GM10248 (cell line): ENCODE measurements at regions of chr7 and their contacts with region 1.

Region 1: DNA sequence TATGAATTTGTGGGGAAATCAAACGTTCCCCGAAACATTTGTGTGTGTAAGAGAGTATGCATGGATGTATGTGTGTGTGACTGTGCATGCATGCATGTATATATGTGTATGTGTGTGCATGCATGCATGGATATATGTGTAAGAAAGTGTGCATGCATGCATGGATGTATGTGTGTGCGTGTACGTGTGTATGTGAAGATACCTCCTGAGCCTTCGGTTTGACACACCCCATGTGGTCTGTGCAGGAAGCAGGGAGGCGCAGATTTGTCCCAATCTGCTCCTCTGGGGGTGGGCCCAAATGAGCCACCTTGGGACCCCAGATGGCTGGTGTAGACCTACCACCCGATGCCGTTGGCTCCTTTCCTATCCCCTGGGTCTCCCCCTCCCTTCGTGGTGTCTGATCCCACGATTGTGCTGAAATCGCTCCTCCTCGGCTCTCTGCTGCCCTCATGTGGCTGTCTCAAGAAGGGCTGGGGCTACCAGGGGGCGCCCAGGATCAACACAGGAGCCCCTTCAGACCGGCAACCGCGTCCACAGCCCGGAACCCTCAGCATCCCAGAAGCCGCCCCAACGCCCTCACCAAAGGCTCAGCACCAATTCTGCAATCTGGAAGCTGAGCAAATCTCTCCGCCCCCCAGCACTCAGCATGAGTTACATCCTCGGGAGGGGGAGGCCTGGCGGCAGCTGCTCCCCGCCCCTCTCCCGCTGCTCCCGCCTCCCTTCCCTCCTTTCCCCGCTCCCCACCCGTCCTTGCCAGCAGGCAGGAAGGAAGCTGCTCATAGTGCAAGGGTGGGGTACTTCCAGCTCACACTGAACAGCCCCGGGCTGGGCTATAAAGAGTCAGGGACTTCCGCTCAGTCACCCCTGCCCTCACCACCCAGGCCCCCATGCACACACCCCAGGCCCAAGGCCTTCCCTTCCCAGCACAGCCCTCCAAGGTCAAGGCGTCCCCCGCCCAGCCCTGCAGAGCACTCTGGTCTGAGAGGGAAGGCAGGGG is 2.3 kb upstream of the NOS3 start:
- DNase-seq: peak; percentile 78
- CTCF ChIP-seq: peak; percentile 73

Region 2: DNA sequence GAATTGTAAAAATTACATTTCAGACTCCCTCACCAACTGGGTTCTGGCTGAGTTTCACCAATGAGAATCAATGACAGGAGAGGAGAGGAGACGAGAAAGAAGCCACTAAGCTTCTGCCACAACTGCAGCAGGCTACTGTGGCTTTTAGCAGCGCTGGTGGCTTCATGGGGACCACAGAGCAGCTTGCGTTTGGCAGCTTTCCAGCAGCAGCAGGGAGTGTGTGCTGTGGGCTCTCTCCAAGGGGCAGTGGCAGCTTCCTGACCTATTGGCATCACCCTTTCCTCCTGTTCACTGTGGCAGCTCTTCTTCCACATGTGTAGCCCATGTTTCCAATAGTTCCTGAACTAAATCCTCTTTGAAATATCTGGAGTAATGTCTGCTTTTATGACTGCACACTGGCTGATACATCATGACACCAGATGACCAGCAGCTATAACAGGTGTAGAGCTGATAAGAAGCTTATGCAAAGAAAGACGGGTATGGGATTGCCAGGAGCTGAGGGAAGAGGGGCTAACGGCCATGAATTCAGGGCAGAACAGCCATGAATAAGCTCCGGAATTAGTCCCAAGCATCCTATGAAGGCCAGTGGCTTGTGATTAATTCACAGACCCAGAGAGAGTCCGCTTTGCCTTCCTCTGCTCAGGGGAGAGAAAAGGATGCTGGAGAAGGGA is 57.2 kb before region 1 on chr7:
- CTCF ChIA-PET with region 1: interaction called, 14 read pairs
- POLR2A ChIA-PET with region 1: no interaction called
- DNase-seq: no peak
- CTCF ChIP-seq: no peak

Region 3: GRCh38 chr7:150974468-150975391 is 13.8 kb before region 1 on chr7:
- CTCF ChIA-PET with region 1: interaction called, 46 read pairs
- POLR2A ChIA-PET with region 1: no interaction called
- DNase-seq: peak; percentile 74
- CTCF ChIP-seq: peak; percentile 55

Region 4: GRCh38 chr7:151123822-151124464 is 135.4 kb after region 1 on chr7:
- CTCF ChIA-PET with region 1: no interaction called
- POLR2A ChIA-PET with region 1: no interaction called
- DNase-seq: peak; percentile 96
- CTCF ChIP-seq: peak; percentile 100